Activated CD4-positive, alpha-beta T cell treated with anti-CD3 and anti-CD28 coated beads, Interleukin-2, amount 10 ng/mL, durations not matched to agents 24 days and 14 days (primary cell): ENCODE measurements at regions of chr13 and their contacts with region 1.

Region 1: GRCh38 chr13:100514788-100515409 is 73.7 kb downstream of the GGACT start:
- DNase-seq: peak; percentile 91
- H3K4me3 Mint-ChIP-seq: no peak overlapping the region
- H3K27ac Mint-ChIP-seq: no peak overlapping the region
- H3K4me1 Mint-ChIP-seq: peaks cover 14% of the 10 kb centered on the region
- H3K27me3 Mint-ChIP-seq: peaks cover 6% of the 10 kb centered on the region

Region 2: DNA sequence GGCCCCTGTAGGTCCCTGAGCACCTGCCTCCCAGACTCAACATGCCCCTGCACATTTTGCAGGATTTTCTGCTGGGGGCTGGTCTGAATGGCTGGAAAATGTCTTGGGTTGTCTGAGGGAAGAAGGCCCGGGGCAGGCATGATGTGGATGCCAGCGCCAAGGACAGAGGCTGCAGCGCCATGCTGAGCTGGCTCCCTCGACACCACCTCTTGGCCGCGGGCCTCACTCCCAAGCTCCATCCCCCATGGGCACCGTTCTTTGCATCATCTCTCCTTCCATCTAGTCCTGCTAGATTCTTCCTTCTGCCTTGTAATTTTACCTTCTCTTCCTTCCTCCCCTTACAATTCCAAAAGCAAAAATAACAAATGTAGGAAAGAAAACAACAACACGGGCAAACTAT is 613.9 kb before region 1 on chr13:
- intact Hi-C with region 1: loop called (anchors 5 kb)
- DNase-seq: no peak
- H3K4me3 Mint-ChIP-seq: no peak overlapping the region
- H3K27ac Mint-ChIP-seq: no peak overlapping the region
- H3K4me1 Mint-ChIP-seq: peaks cover 2% of the 10 kb centered on the region
- H3K27me3 Mint-ChIP-seq: peaks cover 60% of the 10 kb centered on the region

Region 3: DNA sequence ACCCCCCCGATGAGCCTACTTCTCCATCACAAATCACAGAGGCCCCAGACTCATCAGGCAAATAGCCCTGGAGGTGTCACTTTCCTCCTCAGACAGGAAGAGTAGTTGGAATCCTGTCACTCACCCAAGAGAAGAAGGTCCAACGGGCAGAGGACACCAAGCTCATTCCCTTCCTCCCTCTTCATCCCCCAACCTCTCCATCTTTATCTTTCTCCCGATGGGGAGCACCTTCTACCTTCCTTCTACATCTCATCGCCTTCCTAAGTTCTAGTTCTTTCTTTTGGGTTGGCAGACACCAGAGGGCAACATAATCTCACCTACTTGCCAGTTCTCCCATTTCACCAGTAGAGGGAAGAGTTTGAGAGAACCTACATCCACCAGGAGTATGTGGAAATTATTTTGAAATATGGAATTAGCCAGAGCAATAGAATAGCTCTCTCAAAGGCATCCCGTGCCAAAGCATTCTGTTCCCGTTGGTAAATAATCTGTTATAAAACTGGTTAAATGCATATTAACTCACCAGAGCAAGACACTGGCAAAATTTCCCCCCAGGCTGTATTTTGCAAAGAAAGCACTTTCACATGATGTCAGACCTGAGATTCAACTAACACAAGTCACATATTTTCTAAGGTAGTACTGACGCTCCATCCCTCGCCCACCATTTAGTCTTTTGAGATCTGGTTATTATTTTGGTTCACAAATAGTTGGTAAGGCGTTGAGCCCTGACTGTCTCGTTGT is 598.4 kb before region 1 on chr13:
- intact Hi-C with region 1: loop called (anchors 1 kb)
- DNase-seq: peak; percentile 77
- H3K4me3 Mint-ChIP-seq: no peak overlapping the region
- H3K27ac Mint-ChIP-seq: no peak overlapping the region
- H3K4me1 Mint-ChIP-seq: peaks cover 21% of the 10 kb centered on the region
- H3K27me3 Mint-ChIP-seq: peaks cover 9% of the 10 kb centered on the region

Region 4: GRCh38 chr13:100235311-100235901 is 279.5 kb before region 1 on chr13:
- intact Hi-C with region 1: loop called (anchors 2 kb)
- DNase-seq: peak; percentile 76
- H3K4me3 Mint-ChIP-seq: no peak overlapping the region
- H3K27ac Mint-ChIP-seq: no peak overlapping the region
- H3K4me1 Mint-ChIP-seq: peaks cover 7% of the 10 kb centered on the region
- H3K27me3 Mint-ChIP-seq: no peaks in the 10 kb centered on the region